ENCODE measurements at regions of chr3 and their contacts with region 1.

Region 1: GRCh38 chr3:124281453-124282316 is 289.8 kb upstream of the ROPN1 start:
- DNase-seq: no peak
- H3K4me3 ChIP-seq: no peak overlapping the region
- H3K27ac ChIP-seq: peak overlapping the region in 3 of 4 donors; percentile 71 to 85 (median 79)
- H3K4me1 ChIP-seq: peaks cover 0 to 62% (median 40%) of the 10 kb centered on the region in 4 donors
- H3K27me3 ChIP-seq: no peaks in the 10 kb centered on the region
- CTCF ChIP-seq: peak in 3 of 4 experiments; percentile 31 to 34 (median 33)
- EP300 ChIP-seq: no peak
- POLR2A ChIP-seq: no peak

Region 2: DNA sequence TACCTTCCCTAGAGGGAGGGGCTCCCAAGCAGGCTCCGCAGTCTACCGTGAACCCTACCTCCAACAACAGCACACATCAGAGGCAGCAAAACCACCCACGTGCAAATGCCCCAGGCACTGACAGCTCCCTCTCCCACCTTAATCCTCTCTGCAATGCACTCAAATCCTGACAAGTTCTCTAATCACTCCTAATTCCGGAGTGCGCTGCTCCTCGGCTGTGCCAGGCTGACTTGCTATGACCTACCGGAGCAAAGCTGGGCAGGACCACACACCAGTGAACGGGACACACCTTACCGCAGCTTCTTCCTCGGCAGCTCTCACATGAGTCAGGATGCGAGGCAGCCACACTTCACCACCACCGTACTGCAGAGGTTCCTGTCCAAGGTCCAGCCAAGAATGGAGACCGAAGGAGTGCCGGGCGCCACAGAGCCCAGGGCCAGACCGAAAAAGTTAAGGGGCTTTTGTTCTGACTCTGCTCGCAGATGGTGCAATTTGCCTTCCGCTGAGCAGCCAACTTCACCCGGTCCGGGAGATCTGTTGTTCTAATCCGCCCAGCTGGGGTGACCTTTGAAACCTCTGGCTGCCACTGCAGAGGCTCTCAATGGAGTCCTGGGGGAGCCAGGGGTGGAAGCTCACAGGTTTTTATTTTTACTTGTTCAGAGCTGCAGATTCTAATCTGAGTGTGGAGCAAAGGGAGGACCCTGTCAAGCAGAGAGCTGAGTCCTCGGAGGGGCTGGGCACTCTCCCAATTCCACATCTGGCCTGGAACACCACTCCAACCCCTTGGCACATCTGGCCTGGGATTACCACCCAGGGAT is 481.9 kb before region 1 on chr3:
- intact Hi-C with region 1: no loop called
- DNase-seq: no peak
- H3K4me3 ChIP-seq: no peak overlapping the region
- H3K27ac ChIP-seq: no peak overlapping the region
- H3K4me1 ChIP-seq: no peaks in the 10 kb centered on the region
- H3K27me3 ChIP-seq: no peaks in the 10 kb centered on the region
- CTCF ChIP-seq: no peak
- EP300 ChIP-seq: no peak
- POLR2A ChIP-seq: no peak

Region 3: GRCh38 chr3:124014366-124014942 is 267.2 kb before region 1 on chr3:
- intact Hi-C with region 1: loop called (anchors 2 kb)
- DNase-seq: no peak
- H3K4me3 ChIP-seq: no peak overlapping the region
- H3K27ac ChIP-seq: no peak overlapping the region
- H3K4me1 ChIP-seq: peaks cover 0 to 5% (median 0%) of the 10 kb centered on the region in 4 donors
- H3K27me3 ChIP-seq: no peaks in the 10 kb centered on the region
- CTCF ChIP-seq: no peak
- EP300 ChIP-seq: no peak
- POLR2A ChIP-seq: no peak

Region 4: GRCh38 chr3:124032648-124033359 is 248.9 kb before region 1 on chr3:
- intact Hi-C with region 1: loop called (anchors 5 kb)
- DNase-seq: peak; percentile 91
- H3K4me3 ChIP-seq: peak overlapping the region; percentile 44 to 76 (median 73)
- H3K27ac ChIP-seq: peak overlapping the region; percentile 78 to 89 (median 81)
- H3K4me1 ChIP-seq: peaks cover 0 to 27% (median 21%) of the 10 kb centered on the region in 4 donors
- H3K27me3 ChIP-seq: peaks cover 5 to 18% (median 17%) of the 10 kb centered on the region in 3 donors
- CTCF ChIP-seq: peak; percentile 26 to 86 (median 36)
- EP300 ChIP-seq: no peak
- POLR2A ChIP-seq: no peak

Region 5: DNA sequence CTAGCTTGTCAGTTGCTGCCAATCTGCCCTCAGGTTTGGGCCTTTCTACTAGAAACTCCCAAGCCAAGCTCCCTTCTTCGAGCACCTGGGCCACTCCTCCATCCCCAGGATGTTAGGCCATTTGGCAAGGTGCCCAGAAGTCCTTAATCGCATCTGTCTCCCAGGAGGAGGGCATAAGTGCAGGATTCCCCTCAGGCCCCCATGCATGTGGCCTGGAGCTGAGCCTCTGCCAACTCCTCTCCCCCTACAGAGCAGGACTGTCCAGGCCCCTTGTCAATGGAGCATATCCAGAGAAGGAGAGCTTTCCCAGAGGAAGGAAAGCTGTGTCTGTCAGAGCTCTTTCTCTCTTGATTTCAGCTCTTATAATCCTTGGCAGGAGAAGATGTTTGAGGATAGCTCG is 107.2 kb before region 1 on chr3:
- intact Hi-C with region 1: loop called (anchors 5 kb)
- DNase-seq: no peak
- H3K4me3 ChIP-seq: no peak overlapping the region
- H3K27ac ChIP-seq: no peak overlapping the region
- H3K4me1 ChIP-seq: peaks cover 0 to 42% (median 15%) of the 10 kb centered on the region in 4 donors
- H3K27me3 ChIP-seq: no peaks in the 10 kb centered on the region
- CTCF ChIP-seq: no peak
- EP300 ChIP-seq: no peak
- POLR2A ChIP-seq: no peak

Region 6: GRCh38 chr3:124467980-124468902 is 186.6 kb after region 1 on chr3:
- intact Hi-C with region 1: loop called (anchors 10 kb)
- DNase-seq: no peak
- H3K4me3 ChIP-seq: no peak overlapping the region
- H3K27ac ChIP-seq: no peak overlapping the region
- H3K4me1 ChIP-seq: no peaks in the 10 kb centered on the region
- H3K27me3 ChIP-seq: no peaks in the 10 kb centered on the region
- CTCF ChIP-seq: peak; percentile 39 to 92 (median 88)
- EP300 ChIP-seq: no peak
- POLR2A ChIP-seq: no peak

Region 7: GRCh38 chr3:124540550-124541211 is 259.0 kb after region 1 on chr3:
- intact Hi-C with region 1: no loop called
- DNase-seq: no peak
- H3K4me3 ChIP-seq: no peak overlapping the region
- H3K27ac ChIP-seq: no peak overlapping the region
- H3K4me1 ChIP-seq: no peaks in the 10 kb centered on the region
- H3K27me3 ChIP-seq: no peaks in the 10 kb centered on the region
- CTCF ChIP-seq: no peak
- EP300 ChIP-seq: no peak
- POLR2A ChIP-seq: no peak